Aorta (tissue), 5 donors: ENCODE measurements at regions of chr12 and their contacts with region 1.

Region 1: GRCh38 chr12:11576104-11576503 is 73.4 kb upstream of the ETV6 start:
- DNase-seq: no peak
- ATAC-seq: no peak
- H3K4me3 ChIP-seq: no peak overlapping the region
- H3K27ac ChIP-seq: no peak overlapping the region
- H3K4me1 ChIP-seq: peaks cover 0 to 9% of the 10 kb centered on the region in 2 donors
- H3K27me3 ChIP-seq: no peaks in the 10 kb centered on the region

Region 2: GRCh38 chr12:11563785-11564739 is 12.0 kb before region 1 on chr12:
- intact Hi-C with region 1: loop called in 1 of 2 experiments (anchors 2 kb)
- DNase-seq: no peak
- ATAC-seq: no peak
- H3K4me3 ChIP-seq: no peak overlapping the region
- H3K27ac ChIP-seq: no peak overlapping the region
- H3K4me1 ChIP-seq: peaks cover 0 to 3% of the 10 kb centered on the region in 2 donors
- H3K27me3 ChIP-seq: no peaks in the 10 kb centered on the region